GM12878 (cell line): ENCODE measurements at regions of chr4 and their contacts with region 1.

Region 1: GRCh38 chr4:105605493-105605892 is 53.1 kb downstream of the ARHGEF38 start:
- DNase-seq: no peak
- ATAC-seq: peak; percentile 71
- H3K4me3 ChIP-seq: no peak overlapping the region
- H3K27ac ChIP-seq: no peak overlapping the region
- H3K4me1 ChIP-seq: no peaks in the 10 kb centered on the region
- H3K27me3 ChIP-seq: no peaks in the 10 kb centered on the region
- CTCF ChIP-seq: no peak
- EP300 ChIP-seq: 0 out of 4 replicates have a peak, but pooled peaks of 1 of the 2 experiments have one; percentile 58
- POLR2A ChIP-seq: no peak
- RAD21 ChIP-seq: no peak

Region 2: DNA sequence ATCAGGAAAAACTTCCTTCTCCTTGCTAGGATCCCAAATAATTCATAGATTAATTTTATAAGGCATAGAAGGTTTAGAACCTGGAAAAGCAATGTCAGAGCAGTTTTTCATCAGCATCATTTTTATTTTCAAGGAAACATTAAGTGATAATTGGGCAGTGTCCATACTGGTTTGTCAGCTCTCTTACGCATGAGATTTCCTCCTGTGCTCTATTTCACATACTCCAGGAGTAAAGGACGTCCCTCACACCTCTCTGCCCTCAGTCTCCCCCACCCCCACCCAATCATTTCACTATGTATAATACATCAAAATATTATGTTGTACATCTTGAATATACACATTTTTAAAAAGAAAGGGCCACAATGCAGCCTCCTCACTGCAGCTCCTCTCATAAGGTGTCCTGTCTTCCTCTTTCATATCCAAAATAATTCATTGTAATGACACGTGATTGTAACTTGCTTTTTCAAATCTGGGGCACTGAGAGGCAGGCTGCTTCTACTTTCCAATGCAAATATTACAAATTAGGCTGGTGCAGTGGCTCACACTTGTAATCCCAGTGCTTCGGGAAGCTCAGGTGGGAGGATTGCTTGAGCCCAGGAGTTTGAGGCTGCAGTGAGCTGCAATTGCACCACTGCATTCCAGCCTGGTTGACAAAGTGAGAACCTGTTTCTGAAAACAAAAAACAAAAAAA is 18.7 kb before region 1 on chr4:
- CTCF ChIA-PET with region 1: interaction called, 3 read pairs
- POLR2A ChIA-PET with region 1: no interaction called
- RAD21 ChIA-PET with region 1: interaction called, 9 read pairs
- SMC1A ChIA-PET with region 1: interaction called, 13 read pairs
- in situ Hi-C with region 1: no loop called
- intact Hi-C with region 1: no loop called
- DNase-seq: no peak
- ATAC-seq: peak; percentile 61
- H3K4me3 ChIP-seq: no peak overlapping the region
- H3K27ac ChIP-seq: no peak overlapping the region
- H3K4me1 ChIP-seq: peaks cover 10% of the 10 kb centered on the region; the same call in 1 of the 2 replicates
- H3K27me3 ChIP-seq: no peaks in the 10 kb centered on the region
- CTCF ChIP-seq: no peak; a peak in 1 of 6 replicates
- EP300 ChIP-seq: no peak
- POLR2A ChIP-seq: no peak
- RAD21 ChIP-seq: 0 out of 2 replicates have a peak, but pooled peaks have one; percentile 9

Region 3: DNA sequence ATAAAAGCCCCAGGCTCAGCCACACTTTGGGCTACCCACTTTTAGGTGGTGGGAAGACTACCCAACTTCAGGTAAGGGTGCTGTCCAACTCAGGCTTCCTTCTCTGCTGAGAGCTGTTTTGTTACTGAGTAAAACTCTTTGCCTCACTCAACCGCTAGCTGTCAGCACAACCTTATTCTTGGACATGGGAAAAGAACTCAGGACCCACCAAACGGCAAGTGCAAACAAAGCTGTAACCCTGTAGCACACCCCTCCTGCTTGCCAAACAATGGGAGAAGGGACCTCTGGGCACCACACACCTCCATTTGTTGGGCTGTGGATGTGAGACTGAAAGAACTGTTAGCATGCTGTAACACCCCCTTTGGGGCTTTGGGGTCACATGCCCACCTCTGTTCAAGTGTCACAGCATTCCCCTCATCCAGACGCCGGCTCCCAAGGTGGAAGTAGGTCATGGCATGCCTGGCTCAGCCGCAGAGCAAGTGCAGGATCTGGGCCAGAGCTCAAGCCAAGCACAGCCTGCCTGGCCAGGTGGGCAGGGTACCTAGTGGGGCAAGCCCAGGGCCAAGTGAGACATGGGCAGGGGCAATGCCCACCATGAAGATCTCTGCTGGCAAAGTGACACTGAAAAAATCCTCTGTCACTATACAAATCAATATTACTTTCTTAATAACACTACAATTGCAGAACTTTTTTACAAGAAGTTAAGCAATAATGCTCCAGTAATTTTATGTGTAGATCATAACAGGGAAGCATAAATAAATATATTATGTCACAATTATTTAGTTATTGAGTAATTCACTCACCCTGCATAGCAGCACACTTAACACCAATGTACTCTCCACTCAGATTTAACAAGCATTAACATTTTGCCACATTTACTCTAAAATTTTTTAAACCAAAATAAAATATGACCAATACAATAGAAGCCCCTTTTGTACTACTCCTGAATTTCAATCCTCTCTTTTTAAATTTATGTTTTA is 603.3 kb after region 1 on chr4:
- CTCF ChIA-PET with region 1: no interaction called
- POLR2A ChIA-PET with region 1: no interaction called
- RAD21 ChIA-PET with region 1: no interaction called
- SMC1A ChIA-PET with region 1: no interaction called
- in situ Hi-C with region 1: no loop called
- intact Hi-C with region 1: no loop called
- DNase-seq: no peak
- ATAC-seq: no peak
- H3K4me3 ChIP-seq: no peak overlapping the region
- H3K27ac ChIP-seq: no peak overlapping the region
- H3K4me1 ChIP-seq: no peaks in the 10 kb centered on the region
- H3K27me3 ChIP-seq: no peaks in the 10 kb centered on the region
- CTCF ChIP-seq: no peak
- EP300 ChIP-seq: no peak
- POLR2A ChIP-seq: no peak
- RAD21 ChIP-seq: no peak